Activated CD8-positive, alpha-beta memory T cell treated with anti-CD3 and anti-CD28 coated beads, Interleukin-2, amount 10 ng/mL, durations not matched to agents 7 days and 5 days (primary cell): ENCODE measurements at regions of chr9 and their contacts with region 1.

Region 1: DNA sequence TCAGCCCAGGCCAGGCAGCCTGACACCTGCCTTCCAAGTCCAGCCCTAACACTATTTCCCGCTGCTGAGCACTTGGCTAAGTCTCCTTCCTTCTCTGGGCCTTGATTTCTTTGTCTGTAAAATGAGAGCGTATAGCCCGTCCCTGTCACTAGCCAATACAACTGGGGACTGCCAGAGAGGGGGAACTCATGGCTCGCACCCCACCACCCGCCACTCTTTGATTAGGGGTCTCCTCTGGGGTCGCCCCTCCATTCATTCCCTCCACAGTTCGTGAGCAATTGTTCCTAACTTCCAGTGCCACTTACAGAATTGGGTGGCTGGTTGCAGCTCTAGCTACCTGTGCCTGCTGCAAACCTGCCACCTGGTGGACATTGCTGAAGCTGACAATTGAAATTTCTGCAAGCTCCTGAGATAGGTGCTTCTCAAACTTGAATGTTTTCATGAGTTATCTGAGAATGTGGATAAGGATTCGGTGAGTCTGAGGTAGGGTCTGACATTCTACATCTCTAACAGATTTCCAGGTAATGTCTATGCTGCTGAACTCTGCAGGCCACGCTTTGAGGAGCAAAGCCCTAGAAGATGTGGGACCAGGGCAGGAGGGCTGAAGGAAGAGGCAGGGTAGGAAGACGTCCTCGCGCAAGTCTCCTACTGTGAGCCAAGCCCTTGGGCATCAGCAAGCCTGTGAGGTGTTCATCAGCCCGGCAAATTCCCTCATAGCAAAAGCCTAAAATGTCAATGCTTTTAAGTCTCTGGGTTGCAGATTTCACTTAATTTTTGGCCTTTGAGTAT is 13.3 kb upstream of the RECK start:
- DNase-seq: peak; percentile 79
- ATAC-seq: peak; percentile 78
- H3K4me3 Mint-ChIP-seq: no peak overlapping the region
- H3K27ac Mint-ChIP-seq: no peak overlapping the region
- H3K4me1 Mint-ChIP-seq: no peaks in the 10 kb centered on the region
- H3K27me3 Mint-ChIP-seq: peaks cover 4% of the 10 kb centered on the region

Region 2: DNA sequence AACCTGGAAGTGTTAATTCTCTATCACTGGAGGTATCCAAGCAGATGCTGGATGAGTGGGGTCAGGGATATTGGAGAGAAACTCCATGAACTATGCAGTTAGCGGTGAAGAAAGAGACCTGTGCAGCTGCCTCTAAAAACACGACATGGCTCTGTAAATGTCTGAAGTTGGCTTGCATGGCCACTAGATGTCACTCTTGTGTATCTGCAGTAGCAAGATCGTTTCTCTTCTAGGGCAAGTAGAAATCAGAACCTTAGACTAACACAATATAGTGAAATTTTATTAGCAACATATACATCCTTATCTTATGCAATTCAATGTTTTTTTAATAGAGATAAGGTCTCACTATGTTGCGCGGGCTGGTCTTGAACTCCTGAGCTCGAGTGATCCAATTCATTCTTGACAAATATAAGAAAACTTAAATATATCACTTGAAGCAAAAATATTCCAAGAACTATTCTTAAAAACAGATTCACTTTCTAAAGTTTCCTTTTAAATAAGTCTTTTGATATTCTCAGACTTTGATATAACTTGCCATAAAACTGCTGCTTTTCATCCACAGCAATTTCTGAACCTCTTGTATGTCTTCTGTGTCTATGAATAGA is 68.4 kb before region 1 on chr9:
- CTCF ChIA-PET with region 1: interaction called, 20 read pairs
- DNase-seq: peak; percentile 68
- ATAC-seq: peak; percentile 68
- H3K4me3 Mint-ChIP-seq: no peak overlapping the region
- H3K27ac Mint-ChIP-seq: no peak overlapping the region
- H3K4me1 Mint-ChIP-seq: no peaks in the 10 kb centered on the region
- H3K27me3 Mint-ChIP-seq: peaks cover 48% of the 10 kb centered on the region

Region 3: GRCh38 chr9:36036780-36037548 is 13.5 kb after region 1 on chr9 and contains the start of gene RECK:
- CTCF ChIA-PET with region 1: interaction called, 13 read pairs
- DNase-seq: peak; percentile 89
- ATAC-seq: peak; percentile 93
- H3K4me3 Mint-ChIP-seq: peak within 1 kb of the TSS; percentile 81
- H3K27ac Mint-ChIP-seq: peak within 1 kb of the TSS; percentile 76
- H3K4me1 Mint-ChIP-seq: peaks cover 33% of the 10 kb centered on the region
- H3K27me3 Mint-ChIP-seq: peaks cover 19% of the 10 kb centered on the region
- total RNA-seq, gene RECK: 6.1 to 8.1 TPM

Region 4: GRCh38 chr9:36080519-36080918 is 57.1 kb after region 1 on chr9:
- CTCF ChIA-PET with region 1: no interaction called
- DNase-seq: no peak
- ATAC-seq: no peak
- H3K4me3 Mint-ChIP-seq: no peak overlapping the region
- H3K27ac Mint-ChIP-seq: no peak overlapping the region
- H3K4me1 Mint-ChIP-seq: no peaks in the 10 kb centered on the region
- H3K27me3 Mint-ChIP-seq: no peaks in the 10 kb centered on the region